ENCODE measurements at regions of chr3 and their contacts with region 1.

Region 1: GRCh38 chr3:185942907-185943759 is 5.3 kb upstream of the TRA2B start:
- DNase-seq: peak; percentile 62 to 83
- ATAC-seq: peak; percentile 92 to 94
- H3K4me3 ChIP-seq: no peak overlapping the region
- H3K27ac ChIP-seq: peak overlapping the region; percentile 66 to 75
- H3K4me1 ChIP-seq: peaks cover 6% of the 10 kb centered on the region
- CTCF ChIP-seq: peak; percentile 79
- EP300 ChIP-seq: no peak
- POLR2A ChIP-seq: no peak
- RAD21 ChIP-seq: peak; percentile 52 to 61

Region 2: DNA sequence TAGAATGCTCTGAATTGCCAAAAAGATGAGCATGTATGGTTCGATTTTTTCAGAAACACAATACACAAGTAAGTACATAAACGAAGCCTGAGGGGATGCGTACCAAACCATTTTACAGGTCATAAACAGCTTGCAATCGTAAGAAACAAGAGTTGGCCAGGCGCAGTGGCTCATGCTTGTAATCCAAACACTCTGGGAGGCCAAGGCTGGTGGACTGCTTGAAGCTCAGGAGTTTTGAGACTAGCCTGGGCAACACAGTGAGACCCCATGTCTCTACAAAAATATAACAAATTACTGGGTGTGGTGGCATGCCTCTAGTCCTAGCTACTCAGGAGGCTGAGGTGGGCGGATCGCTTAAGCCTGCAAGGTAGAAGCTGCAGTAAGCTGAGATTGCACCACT is 18.8 kb before region 1 on chr3:
- CTCF ChIA-PET with region 1: interaction called, 10 read pairs
- POLR2A ChIA-PET with region 1: interaction called, 25 read pairs
- DNase-seq: no peak
- ATAC-seq: peak in 1 of 2 experiments; percentile 17; a peak in 3 of 6 replicates
- H3K4me3 ChIP-seq: no peak overlapping the region
- H3K27ac ChIP-seq: no peak overlapping the region
- H3K4me1 ChIP-seq: peaks cover 47% of the 10 kb centered on the region
- CTCF ChIP-seq: no peak
- EP300 ChIP-seq: no peak
- POLR2A ChIP-seq: no peak
- RAD21 ChIP-seq: no peak

Region 3: GRCh38 chr3:185929192-185930151 is 13.7 kb before region 1 on chr3:
- CTCF ChIA-PET with region 1: interaction called, 11 read pairs
- POLR2A ChIA-PET with region 1: interaction called, 25 read pairs
- DNase-seq: no peak
- ATAC-seq: peak in 1 of 2 experiments; percentile 17; a peak in 2 of 6 replicates
- H3K4me3 ChIP-seq: peak overlapping the region; percentile 9; the same call in 1 of the 3 replicates
- H3K27ac ChIP-seq: no peak overlapping the region
- H3K4me1 ChIP-seq: peaks cover 93% of the 10 kb centered on the region
- CTCF ChIP-seq: no peak
- EP300 ChIP-seq: no peak
- POLR2A ChIP-seq: no peak
- RAD21 ChIP-seq: no peak

Region 4: GRCh38 chr3:185959609-185960517 is 16.7 kb after region 1 on chr3:
- CTCF ChIA-PET with region 1: interaction called, 158 read pairs
- POLR2A ChIA-PET with region 1: interaction called, 18 read pairs
- DNase-seq: peak; percentile 48 to 82
- ATAC-seq: peak; percentile 59 to 67
- H3K4me3 ChIP-seq: peak overlapping the region; percentile 58
- H3K27ac ChIP-seq: peak overlapping the region; percentile 81 to 88
- H3K4me1 ChIP-seq: peaks cover 21% of the 10 kb centered on the region
- CTCF ChIP-seq: no peak
- EP300 ChIP-seq: no peak
- POLR2A ChIP-seq: peak; percentile 42
- RAD21 ChIP-seq: no peak

Region 5: GRCh38 chr3:185968168-185968567 is 25.0 kb after region 1 on chr3:
- CTCF ChIA-PET with region 1: interaction called, 158 read pairs
- POLR2A ChIA-PET with region 1: interaction called, 3 read pairs
- DNase-seq: no peak
- ATAC-seq: peak in 1 of 2 experiments; percentile 13; a peak in 1 of 6 replicates
- H3K4me3 ChIP-seq: no peak overlapping the region
- H3K27ac ChIP-seq: 0 out of 6 replicates have a peak overlapping the region, but pooled peaks of 1 of the 2 experiments have one; percentile 31
- H3K4me1 ChIP-seq: peaks cover 12% of the 10 kb centered on the region; the same call in 2 of the 3 replicates
- CTCF ChIP-seq: no peak
- EP300 ChIP-seq: no peak
- POLR2A ChIP-seq: no peak
- RAD21 ChIP-seq: no peak

Measured in A549 (cell line).